Activated CD8-positive, alpha-beta T cell treated with anti-CD3 and anti-CD28 coated beads, Interleukin-2, amount 10 ng/mL, durations not matched to agents 7 days and 5 days (primary cell): ENCODE measurements at regions of chr5 and their contacts with region 1.

Region 1: DNA sequence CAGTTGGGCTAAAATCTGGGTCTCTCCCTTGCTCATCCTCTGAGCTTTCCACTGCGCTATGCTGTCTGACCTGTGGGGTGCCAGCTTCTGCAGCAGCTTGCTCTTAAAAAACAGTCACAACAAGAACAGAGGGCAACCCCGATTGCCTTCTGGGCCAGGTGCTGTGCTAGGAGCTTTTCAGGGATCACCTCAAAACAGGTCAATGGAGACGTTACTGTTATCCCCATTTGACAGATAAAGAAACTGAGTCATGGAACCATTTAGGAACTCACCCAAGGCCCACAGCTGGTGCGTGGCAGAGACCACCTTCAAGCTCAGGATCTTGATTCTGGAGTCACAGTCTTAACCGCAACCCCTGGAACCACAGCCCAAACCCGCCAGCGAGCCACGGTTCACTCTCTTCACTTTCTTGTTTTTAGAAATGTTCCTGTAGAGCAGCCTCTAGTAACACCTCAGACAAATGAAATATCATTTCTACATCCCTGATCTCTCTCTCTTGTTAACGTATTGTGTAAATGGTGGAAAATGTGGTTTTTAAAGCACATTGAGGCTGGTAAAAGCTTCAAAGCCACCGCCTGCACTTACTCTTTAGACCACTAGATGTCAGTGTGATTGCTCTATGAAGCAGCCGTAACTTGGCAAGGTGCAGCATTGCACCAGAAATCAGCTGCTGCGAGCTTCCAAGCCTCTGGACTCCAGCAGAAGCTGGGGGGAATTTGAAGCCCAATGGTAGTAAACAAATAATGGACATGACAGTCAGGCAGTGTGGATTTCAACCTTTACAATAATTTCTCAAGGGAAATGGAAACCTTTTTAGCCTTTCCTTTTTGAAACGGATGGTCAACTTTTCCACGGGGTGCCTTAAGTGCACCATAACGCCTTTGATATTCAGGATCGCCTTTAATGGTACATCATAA is 1.7 kb downstream of the FYB1 start:
- DNase-seq: peak; percentile 89
- ATAC-seq: peak; percentile 77
- H3K4me3 Mint-ChIP-seq: peak overlapping the region; percentile 68
- H3K27ac Mint-ChIP-seq: peak overlapping the region; percentile 80
- H3K4me1 Mint-ChIP-seq: peaks cover 55% of the 10 kb centered on the region
- H3K27me3 Mint-ChIP-seq: no peaks in the 10 kb centered on the region

Region 2: DNA sequence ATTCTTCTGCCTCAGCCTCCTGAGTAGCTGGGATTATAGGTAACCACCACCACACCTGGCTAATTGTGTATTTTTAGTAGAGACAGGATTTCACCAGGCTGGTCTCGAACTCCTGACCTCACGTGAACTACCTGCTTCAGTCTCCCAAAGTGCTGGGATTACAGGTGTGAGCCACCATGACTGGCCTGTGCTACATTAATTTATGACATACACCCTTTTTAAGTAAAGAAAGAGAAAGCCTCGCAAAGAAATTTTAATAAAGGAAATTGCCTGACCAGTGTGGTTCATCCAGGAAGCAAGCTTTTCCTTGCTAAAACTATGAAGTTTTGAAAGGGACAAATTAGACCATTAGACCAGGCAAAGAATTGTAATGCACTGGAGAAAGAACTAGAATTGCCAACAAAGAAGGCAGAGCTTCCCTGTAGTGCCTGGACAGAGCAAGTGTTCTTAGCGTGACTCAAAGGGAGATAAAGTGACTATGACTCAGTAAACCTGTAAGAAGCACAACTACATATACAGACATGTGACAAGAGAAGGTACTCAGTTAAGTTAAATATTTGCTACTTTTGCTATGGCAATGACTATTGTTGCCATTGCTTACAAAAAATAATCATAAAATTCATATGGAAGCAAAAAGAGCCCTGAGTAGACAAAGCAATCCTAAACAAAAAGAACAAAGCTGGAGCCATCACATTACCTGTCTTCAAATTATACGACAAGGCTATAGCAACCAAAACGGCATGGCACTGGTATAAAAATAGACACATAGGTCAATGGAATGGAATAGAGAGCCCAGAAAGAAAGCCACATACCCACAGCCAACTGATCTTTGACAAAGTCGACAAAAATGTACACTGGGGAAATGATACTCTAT is 52.9 kb before region 1 on chr5:
- CTCF ChIA-PET with region 1: interaction called, 22 read pairs
- POLR2A ChIA-PET with region 1: interaction called, 3 read pairs
- DNase-seq: no peak
- ATAC-seq: peak; percentile 81
- H3K4me3 Mint-ChIP-seq: peak overlapping the region; percentile 69
- H3K27ac Mint-ChIP-seq: peak overlapping the region; percentile 84
- H3K4me1 Mint-ChIP-seq: peaks cover 86% of the 10 kb centered on the region
- H3K27me3 Mint-ChIP-seq: no peaks in the 10 kb centered on the region

Region 3: GRCh38 chr5:39202597-39203274 is 14.9 kb before region 1 on chr5:
- CTCF ChIA-PET with region 1: interaction called, 175 read pairs
- POLR2A ChIA-PET with region 1: interaction called, 84 read pairs
- DNase-seq: peak; percentile 69
- ATAC-seq: peak; percentile 57
- H3K4me3 Mint-ChIP-seq: peak overlapping the region; percentile 86
- H3K27ac Mint-ChIP-seq: peak overlapping the region; percentile 86
- H3K4me1 Mint-ChIP-seq: peaks cover 41% of the 10 kb centered on the region
- H3K27me3 Mint-ChIP-seq: no peaks in the 10 kb centered on the region

Region 4: GRCh38 chr5:39249564-39250274 is 32.1 kb after region 1 on chr5:
- CTCF ChIA-PET with region 1: interaction called, 14 read pairs
- POLR2A ChIA-PET with region 1: no interaction called
- DNase-seq: no peak
- ATAC-seq: no peak
- H3K4me3 Mint-ChIP-seq: no peak overlapping the region
- H3K27ac Mint-ChIP-seq: no peak overlapping the region
- H3K4me1 Mint-ChIP-seq: no peaks in the 10 kb centered on the region
- H3K27me3 Mint-ChIP-seq: no peaks in the 10 kb centered on the region

Region 5: DNA sequence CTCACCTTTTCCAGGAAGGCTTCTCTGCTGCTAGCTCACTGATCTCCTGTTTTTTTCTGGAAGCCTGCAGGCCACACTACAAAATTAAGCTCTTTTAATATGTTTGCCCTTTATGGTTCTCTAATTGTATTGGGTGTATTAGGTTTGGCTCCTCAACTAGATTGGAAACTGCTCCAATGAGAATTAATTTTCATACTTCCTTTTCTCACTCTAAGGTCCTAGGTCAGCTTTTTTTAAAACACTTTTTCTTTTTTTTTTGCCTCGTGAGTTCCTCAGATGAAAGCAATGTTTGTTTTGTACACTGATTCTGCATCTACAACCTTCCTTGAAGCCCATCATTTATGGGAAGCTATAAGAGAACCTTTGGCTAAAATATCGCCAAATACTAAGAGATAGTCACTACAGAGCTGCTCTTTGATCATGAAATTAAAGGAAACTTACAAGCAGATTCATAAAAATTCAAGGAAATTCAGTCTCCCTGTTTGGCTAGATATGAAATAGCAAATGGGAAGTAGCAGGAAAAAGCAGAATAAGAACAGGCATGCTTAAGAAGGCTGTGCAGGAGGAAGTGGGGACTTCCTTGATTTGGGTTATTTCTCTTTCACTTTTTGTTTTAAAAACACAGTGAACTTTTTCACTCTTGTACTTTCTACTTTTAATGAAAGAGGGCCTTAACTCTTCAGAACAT is 56.9 kb after region 1 on chr5:
- CTCF ChIA-PET with region 1: interaction called, 319 read pairs
- POLR2A ChIA-PET with region 1: interaction called, 16 read pairs
- DNase-seq: no peak
- ATAC-seq: peak; percentile 67
- H3K4me3 Mint-ChIP-seq: peak overlapping the region; percentile 78
- H3K27ac Mint-ChIP-seq: peak overlapping the region; percentile 96
- H3K4me1 Mint-ChIP-seq: peaks cover 52% of the 10 kb centered on the region
- H3K27me3 Mint-ChIP-seq: no peaks in the 10 kb centered on the region

Region 6: DNA sequence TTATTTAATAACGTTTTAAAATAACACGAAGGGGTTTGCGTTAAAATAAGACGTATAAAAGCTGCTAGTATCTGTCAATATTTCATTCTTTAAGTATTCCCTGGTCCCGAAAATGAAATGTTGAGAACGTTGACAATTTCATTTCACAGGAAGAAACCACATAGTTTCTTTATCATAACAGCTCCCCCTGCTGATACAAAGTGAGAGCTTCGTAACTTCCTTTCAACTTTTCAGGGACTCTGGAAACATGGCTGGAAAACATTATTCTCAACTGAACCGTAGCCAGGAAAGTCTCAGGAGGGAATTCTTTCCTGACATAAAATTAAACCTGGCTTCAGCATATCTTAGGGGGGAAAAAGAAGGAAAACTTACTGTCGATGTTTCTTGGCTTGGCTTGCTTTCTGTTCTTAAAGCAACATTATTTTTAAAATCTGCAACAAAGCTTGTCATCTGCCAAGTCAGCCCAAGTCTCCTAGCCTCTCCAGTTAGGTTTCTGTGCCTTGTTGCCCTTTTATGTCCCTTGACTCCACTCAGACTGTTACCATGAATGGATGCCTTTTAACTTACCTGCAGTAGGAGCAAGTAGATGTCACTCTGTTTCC is 330.0 kb after region 1 on chr5:
- CTCF ChIA-PET with region 1: interaction called, 30 read pairs
- POLR2A ChIA-PET with region 1: no interaction called
- DNase-seq: peak; percentile 34
- ATAC-seq: no peak
- H3K4me3 Mint-ChIP-seq: no peak overlapping the region
- H3K27ac Mint-ChIP-seq: no peak overlapping the region
- H3K4me1 Mint-ChIP-seq: peaks cover 4% of the 10 kb centered on the region
- H3K27me3 Mint-ChIP-seq: peaks cover 8% of the 10 kb centered on the region